ENCODE measurements at regions of chr6 and their contacts with region 1.

Region 1: DNA sequence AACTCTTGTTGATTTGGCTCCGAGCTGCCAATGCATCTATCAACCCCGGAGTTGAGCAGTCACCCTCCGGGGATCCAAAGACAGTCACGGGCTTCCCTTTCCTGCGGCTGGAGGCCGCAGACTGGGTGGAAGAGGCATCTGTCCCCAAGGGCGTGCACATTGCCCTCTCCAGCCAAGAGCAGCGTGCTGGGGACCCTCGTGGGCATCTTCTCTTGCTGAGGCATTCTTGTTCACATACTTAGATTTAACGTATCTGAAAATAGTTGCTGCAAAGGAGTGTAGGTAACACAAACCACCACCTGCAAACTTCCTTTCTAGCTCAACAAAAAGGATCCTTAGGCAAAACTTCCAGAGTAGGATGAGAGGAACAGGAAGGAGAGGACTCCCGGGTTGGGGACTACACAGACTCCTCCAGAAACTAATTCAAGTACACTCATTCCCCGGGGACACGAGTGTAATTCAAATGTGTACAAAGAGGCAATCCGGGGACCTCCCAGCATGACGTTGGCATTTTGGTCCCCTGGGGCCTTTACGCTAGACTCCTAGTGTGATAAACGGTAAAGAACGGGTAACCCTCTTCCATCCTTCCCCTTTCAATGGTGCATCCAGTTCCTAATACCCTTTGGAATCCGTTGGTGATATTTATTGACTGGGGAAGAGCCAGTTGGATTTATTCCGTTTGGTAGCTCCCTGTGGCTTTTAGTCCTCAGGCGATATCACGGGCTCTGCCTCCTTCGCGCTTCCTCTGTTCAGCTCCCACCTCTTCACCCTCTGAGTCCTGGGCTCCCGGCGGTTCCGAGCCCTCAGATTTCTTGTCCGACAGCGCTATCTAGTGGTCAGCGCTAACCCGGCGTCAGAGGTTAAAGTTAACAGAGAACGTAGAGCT is 2.7 kb upstream of the COL12A1 start:
- DNase-seq: peak; percentile 70
- CTCF ChIP-seq: peak; percentile 95

Region 2: GRCh38 chr6:73739096-73739495 is 1469.4 kb before region 1 on chr6:
- CTCF ChIA-PET with region 1: interaction called, 89 read pairs
- POLR2A ChIA-PET with region 1: no interaction called
- DNase-seq: peak; percentile 46
- CTCF ChIP-seq: peak; percentile 75

Region 3: DNA sequence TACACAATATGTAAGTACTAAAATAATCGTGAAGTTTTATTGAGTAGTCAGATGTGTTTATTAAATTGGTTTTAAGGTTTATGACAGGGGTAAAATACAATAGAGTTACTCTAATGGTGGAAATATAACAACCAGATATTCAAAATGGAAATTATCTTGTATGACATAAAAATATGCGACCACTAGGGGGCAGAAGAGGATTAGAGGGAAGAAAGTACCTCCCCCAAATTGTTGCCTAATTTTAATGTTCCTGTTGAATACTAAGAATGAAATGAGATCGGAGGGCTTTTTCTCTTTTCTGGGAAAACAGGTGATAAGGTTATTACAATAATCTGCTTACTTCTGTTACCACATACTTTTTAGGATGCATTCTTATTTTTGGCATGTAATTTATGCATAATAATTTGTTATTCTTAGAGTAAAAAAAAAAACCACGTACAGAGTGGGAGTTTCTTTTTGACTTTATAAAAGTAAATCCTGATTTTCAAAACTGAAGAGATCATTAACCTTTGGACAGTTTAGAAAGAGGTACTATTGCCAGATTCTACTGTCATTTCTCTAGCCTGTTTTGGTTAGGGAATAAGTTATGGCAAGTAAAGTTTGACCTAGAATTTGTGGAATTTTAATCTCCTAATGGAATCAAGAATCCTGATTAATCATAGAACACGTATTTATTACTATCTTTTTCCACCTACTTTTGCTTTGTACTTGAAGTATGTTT is 1353.4 kb before region 1 on chr6:
- CTCF ChIA-PET with region 1: interaction called, 55 read pairs
- POLR2A ChIA-PET with region 1: no interaction called
- DNase-seq: peak; percentile 44
- CTCF ChIP-seq: peak; percentile 60

Region 4: DNA sequence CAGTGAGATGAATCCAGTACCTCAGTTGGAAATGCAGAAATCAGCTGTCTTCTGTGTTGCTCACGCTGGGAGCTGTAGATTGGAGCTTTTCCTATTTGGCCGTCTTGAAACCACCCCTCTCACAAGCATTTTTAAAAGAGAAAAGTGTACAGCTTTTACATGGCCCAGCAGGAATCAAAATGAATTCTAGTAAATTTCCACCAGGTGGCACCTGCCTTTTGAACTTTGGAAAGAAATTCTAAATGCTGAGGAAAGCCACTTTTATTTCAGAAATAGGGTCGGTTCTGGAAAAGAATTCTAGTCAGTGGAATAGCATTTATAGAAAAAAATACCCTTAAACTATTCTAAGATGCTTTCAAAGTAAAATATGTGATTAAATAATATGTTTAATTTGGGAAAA is 864.7 kb before region 1 on chr6:
- CTCF ChIA-PET with region 1: interaction called, 14 read pairs
- POLR2A ChIA-PET with region 1: no interaction called
- DNase-seq: no peak
- CTCF ChIP-seq: peak; percentile 7

Region 5: DNA sequence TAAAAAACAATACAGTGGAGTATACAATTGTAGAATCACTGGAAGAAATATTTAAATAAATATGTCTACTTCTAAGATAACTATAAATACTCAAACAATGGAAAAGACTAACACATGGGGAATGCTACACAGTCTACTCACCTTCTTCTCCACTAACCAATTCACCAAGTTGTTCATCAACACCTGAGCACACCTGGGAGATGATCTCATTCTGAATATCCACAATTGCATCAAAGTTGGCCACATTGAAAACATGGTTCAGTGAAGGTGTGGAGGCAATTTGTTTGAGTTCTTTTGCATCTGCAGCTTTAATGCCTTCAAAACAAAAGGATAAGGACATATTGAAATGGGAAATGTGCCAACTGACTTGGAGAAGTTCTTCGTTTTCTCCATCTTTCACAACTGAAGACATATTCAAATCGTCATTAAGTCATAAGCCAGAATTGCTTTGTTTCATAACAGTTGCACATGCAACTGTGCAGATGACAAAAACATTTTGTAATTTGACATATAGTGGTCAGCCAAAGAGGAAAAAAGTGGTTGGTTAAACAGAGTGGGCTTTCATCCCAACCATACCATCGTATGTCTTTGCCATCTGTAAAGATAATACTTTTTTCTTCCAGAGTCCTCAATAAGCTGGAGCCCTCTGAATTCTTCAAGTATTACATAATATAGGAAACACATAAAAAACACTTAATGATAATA is 20.2 kb before region 1 on chr6:
- CTCF ChIA-PET with region 1: no interaction called
- POLR2A ChIA-PET with region 1: no interaction called
- DNase-seq: no peak
- CTCF ChIP-seq: no peak

Region 6: GRCh38 chr6:75224303-75224926 is 15.9 kb after region 1 on chr6:
- CTCF ChIA-PET with region 1: interaction called, 54 read pairs
- POLR2A ChIA-PET with region 1: no interaction called
- DNase-seq: no peak
- CTCF ChIP-seq: no peak

Measured in GM10248 (cell line).